Naive thymus-derived CD4-positive, alpha-beta T cell (primary cell): ENCODE measurements at regions of chr4 and their contacts with region 1.

Region 1: GRCh38 chr4:142379277-142380057 is 466.6 kb downstream of the INPP4B start:
- DNase-seq: no peak
- ATAC-seq: no peak
- H3K4me3 ChIP-seq: no peak overlapping the region
- H3K4me3 Mint-ChIP-seq: peak overlapping the region in 3 of 10 donors; percentile 28 to 72 (median 34)
- H3K27ac ChIP-seq: peak overlapping the region; percentile 53
- H3K27ac Mint-ChIP-seq: peak overlapping the region; percentile 8 to 85 (median 75)
- H3K4me1 ChIP-seq: peaks cover 41 to 64% of the 10 kb centered on the region in 2 donors
- H3K4me1 Mint-ChIP-seq: peaks cover 39 to 91% (median 87%) of the 10 kb centered on the region in 7 donors
- H3K27me3 ChIP-seq: no peaks in the 10 kb centered on the region
- H3K27me3 Mint-ChIP-seq: no peaks in the 10 kb centered on the region

Region 2: DNA sequence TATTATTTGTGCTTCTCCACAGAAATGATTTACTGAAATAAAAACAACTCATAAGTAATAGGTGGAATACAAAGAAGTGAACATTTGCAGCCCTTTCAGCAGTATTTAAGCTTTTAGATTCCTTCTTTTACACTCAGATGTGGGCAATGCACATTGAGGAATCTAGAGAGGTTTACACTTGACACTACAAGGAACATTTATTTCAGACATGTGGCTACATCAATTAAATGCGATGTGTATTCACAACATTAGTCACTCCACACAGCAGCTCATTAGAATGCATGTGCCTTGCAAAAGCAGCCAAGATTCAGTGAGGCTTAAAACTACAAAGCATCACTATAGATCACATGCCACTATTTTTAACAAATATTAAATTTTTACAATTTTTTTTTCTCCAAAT is 14.1 kb before region 1 on chr4:
- CTCF ChIA-PET with region 1: no interaction called
- POLR2A ChIA-PET with region 1: interaction called, 26 read pairs
- intact Hi-C with region 1: loop called in 1 of 2 experiments (anchors 1 kb)
- DNase-seq: no peak
- ATAC-seq: no peak
- H3K4me3 ChIP-seq: no peak overlapping the region
- H3K4me3 Mint-ChIP-seq: peak overlapping the region in 6 of 10 donors; percentile 13 to 85 (median 45)
- H3K27ac ChIP-seq: no peak overlapping the region
- H3K27ac Mint-ChIP-seq: peak overlapping the region in 8 of 9 donors; percentile 57 to 92 (median 80)
- H3K4me1 ChIP-seq: peaks cover 34 to 64% of the 10 kb centered on the region in 2 donors
- H3K4me1 Mint-ChIP-seq: peaks cover 46 to 92% (median 79%) of the 10 kb centered on the region in 7 donors
- H3K27me3 ChIP-seq: no peaks in the 10 kb centered on the region
- H3K27me3 Mint-ChIP-seq: no peaks in the 10 kb centered on the region

Region 3: DNA sequence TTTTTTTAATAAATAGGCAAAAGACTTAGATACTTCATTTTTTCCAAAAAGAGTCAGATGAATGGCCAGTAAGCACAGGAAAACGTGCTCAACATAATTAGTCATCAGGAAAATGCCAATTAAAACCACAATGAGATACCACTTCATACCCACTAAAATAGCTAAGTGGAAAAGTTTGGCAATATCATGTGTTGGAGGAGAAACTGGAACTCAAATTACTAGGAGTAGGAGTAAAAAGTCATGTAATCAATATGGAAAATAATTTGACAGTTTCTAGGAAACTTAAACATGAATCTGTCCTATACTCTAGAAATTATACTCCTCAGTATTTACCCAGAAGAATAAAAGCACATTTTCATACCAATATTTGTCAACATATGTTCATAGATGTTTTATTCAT is 16.8 kb after region 1 on chr4:
- CTCF ChIA-PET with region 1: interaction called, 3 read pairs
- POLR2A ChIA-PET with region 1: interaction called, 9 read pairs
- intact Hi-C with region 1: loop called in 1 of 2 experiments (anchors 1 kb)
- DNase-seq: no peak
- ATAC-seq: no peak
- H3K4me3 ChIP-seq: no peak overlapping the region
- H3K4me3 Mint-ChIP-seq: peak overlapping the region in 9 of 10 donors; percentile 47 to 77 (median 66)
- H3K27ac ChIP-seq: peak overlapping the region; percentile 57
- H3K27ac Mint-ChIP-seq: peak overlapping the region in 8 of 9 donors; percentile 37 to 100 (median 63)
- H3K4me1 ChIP-seq: peaks cover 50 to 56% of the 10 kb centered on the region in 2 donors
- H3K4me1 Mint-ChIP-seq: peaks cover 35 to 94% (median 81%) of the 10 kb centered on the region in 7 donors
- H3K27me3 ChIP-seq: no peaks in the 10 kb centered on the region
- H3K27me3 Mint-ChIP-seq: no peaks in the 10 kb centered on the region